PC-3 (cell line): ENCODE measurements at regions of chr14 and their contacts with region 1.

Region 1: DNA sequence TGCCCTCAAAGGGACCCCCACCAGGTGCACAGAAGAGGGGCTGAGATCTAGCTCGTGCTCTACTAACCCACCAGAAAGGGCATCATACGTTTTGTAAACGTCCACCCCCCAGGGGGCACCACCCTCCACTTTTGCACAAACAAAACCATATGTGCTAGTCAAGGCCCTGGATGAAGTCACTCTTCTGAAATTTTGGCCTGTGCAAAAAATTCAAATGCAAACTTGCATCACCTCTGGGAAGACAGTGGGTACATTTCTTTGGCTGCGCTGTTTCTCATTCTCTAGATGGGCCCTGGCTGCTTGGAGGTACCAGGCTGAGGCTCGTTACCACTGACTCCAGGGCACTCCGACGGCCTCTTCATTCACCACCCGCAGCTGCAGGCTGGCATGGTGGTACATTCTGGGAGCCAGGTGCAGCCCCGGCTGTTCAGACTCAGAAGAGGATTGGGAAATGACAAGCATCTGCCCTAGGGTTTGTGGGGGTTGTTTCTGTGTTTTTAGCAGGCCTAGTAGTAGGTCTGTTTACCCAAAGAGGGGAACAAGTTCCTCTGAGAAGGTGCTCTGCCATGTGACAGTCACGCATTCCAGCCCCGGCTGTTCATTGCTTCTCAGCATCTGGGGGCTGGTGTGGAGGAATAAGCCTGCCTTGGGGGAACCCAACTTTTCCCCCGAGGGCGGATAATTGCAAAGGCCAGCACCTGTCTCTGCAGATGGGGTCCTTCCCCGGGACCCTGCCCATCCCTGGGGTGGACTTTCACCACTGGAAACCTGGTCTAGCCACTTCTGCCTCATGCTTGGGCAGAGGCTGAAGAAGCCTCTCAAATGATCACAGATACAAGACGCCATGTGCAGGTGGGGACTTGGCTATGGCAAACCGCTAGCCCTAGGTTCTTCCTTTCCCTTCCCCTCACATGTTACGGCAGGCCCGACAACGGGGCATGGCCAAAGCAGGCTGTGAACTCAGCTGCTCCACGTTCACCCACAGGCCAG is 147.6 kb downstream of the DPF3 start:
- DNase-seq: peak; percentile 48
- ATAC-seq: peak; percentile 41
- H3K4me3 ChIP-seq: no peak overlapping the region
- H3K27ac ChIP-seq: peak overlapping the region; percentile 67
- H3K4me1 ChIP-seq: peaks cover 27% of the 10 kb centered on the region
- H3K27me3 ChIP-seq: no peaks in the 10 kb centered on the region
- CTCF ChIP-seq: peak; percentile 36

Region 2: DNA sequence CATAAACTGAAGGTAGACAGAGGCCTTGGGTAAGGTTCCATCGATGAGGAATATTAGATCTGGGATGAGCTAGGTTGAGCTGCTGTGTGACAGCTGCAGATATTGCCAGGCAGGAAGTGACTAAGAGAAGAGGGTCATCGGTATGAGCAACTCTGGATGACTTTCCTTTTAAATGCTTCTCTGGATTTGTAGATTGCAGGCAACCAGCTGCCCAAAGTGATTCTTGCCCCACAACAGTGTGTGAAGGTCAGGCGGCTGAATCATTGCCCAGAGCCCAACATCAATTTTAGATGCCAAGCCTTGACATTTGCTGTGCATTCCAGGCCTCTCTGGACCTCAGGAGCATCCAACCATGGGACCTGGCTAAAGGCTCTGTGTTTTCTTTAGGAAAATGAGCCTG is 108.3 kb before region 1 on chr14:
- CTCF ChIA-PET with region 1: no interaction called
- POLR2A ChIA-PET with region 1: no interaction called
- intact Hi-C with region 1: loop called (anchors 5 kb)
- DNase-seq: peak; percentile 91
- ATAC-seq: peak; percentile 50
- H3K4me3 ChIP-seq: no peak overlapping the region
- H3K27ac ChIP-seq: peak overlapping the region; percentile 90
- H3K4me1 ChIP-seq: peaks cover 51% of the 10 kb centered on the region
- H3K27me3 ChIP-seq: no peaks in the 10 kb centered on the region
- CTCF ChIP-seq: no peak

Region 3: DNA sequence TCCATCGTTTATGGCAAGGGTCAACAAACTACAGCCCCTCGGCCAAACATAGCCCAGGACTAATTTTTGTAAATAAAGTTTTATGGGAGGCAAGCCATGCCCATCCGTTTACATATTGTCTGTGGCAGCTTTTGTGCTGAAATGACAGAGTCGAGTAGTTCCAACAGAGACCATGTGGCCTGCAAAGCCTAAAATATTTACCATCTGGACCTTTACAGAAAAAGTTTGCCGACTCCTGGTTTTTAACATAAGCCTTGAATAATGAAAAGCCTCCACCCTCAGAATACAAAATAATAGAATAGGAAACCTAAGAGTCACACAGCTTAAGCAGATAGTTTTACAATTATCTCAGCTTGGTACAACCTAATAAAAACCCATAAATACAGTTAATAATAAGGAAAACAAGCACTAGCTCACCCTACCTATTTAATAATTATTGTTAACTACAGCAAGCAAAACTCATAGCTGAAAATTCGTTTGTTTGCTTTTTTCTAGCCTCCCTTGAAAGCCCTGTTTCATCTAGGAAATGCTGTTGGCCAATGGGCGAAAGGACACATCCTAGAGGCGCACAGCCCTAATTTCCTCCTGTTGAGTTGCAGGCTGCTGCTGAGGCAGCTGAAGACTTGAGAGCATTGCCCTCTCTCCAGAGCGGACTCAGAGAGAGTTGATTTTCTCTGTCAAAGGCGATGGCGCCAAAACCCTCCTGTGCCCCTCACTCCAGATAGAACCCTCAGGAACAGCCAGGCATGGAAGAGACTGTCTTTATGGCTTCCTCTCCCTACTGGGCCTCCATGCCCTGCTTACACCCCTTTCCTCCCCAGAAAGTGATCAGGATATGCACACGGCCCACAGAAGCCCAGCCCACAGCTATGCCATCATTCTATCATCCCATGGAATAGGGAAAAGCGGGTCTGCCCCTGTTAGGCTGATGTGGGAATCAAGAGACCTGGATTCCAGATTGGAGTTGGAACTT is 40.4 kb after region 1 on chr14:
- CTCF ChIA-PET with region 1: no interaction called
- POLR2A ChIA-PET with region 1: no interaction called
- intact Hi-C with region 1: loop called (anchors 1 kb)
- DNase-seq: no peak
- ATAC-seq: no peak
- H3K4me3 ChIP-seq: no peak overlapping the region
- H3K27ac ChIP-seq: no peak overlapping the region
- H3K4me1 ChIP-seq: peaks cover 5% of the 10 kb centered on the region; the same call in 1 of the 2 replicates
- H3K27me3 ChIP-seq: no peaks in the 10 kb centered on the region
- CTCF ChIP-seq: no peak

Region 4: GRCh38 chr14:72801381-72801812 is 55.1 kb after region 1 on chr14:
- CTCF ChIA-PET with region 1: no interaction called
- POLR2A ChIA-PET with region 1: no interaction called
- intact Hi-C with region 1: loop called (anchors 1 kb)
- DNase-seq: peak; percentile 99
- ATAC-seq: peak; percentile 98
- H3K4me3 ChIP-seq: peak overlapping the region; percentile 9; the same call in 1 of the 2 replicates
- H3K27ac ChIP-seq: peak overlapping the region; percentile 94
- H3K4me1 ChIP-seq: peaks cover 27% of the 10 kb centered on the region
- H3K27me3 ChIP-seq: no peaks in the 10 kb centered on the region
- CTCF ChIP-seq: no peak

Region 5: GRCh38 chr14:73091852-73092251 is 345.6 kb after region 1 on chr14:
- CTCF ChIA-PET with region 1: no interaction called
- POLR2A ChIA-PET with region 1: no interaction called
- intact Hi-C with region 1: no loop called
- DNase-seq: peak; percentile 89
- ATAC-seq: peak; percentile 82
- H3K4me3 ChIP-seq: no peak overlapping the region
- H3K27ac ChIP-seq: no peak overlapping the region; the same call in 1 of the 2 replicates
- H3K4me1 ChIP-seq: peaks cover 6% of the 10 kb centered on the region
- H3K27me3 ChIP-seq: no peaks in the 10 kb centered on the region
- CTCF ChIP-seq: no peak